Naive thymus-derived CD8-positive, alpha-beta T cell (primary cell): ENCODE measurements at regions of chr5 and their contacts with region 1.

Region 1: GRCh38 chr5:115296124-115297022 is at the start of gene CCDC112:
- DNase-seq: peak; percentile 43 to 86 (median 69)
- ATAC-seq: peak; percentile 84 to 87
- H3K4me3 Mint-ChIP-seq: peak within 1 kb of the TSS; percentile 70 to 95 (median 89)
- H3K27ac Mint-ChIP-seq: peak within 1 kb of the TSS; percentile 38 to 93 (median 54)
- H3K4me1 Mint-ChIP-seq: peaks cover 3 to 27% (median 12%) of the 10 kb centered on the region in 4 donors
- H3K27me3 Mint-ChIP-seq: peaks cover 0 to 8% (median 0%) of the 10 kb centered on the region in 5 donors
- polyA plus RNA-seq, gene CCDC112: 2.8 to 4.5 (median 4.3) TPM

Region 2: GRCh38 chr5:115262321-115263077 is 33.9 kb before region 1 on chr5 and contains the start of gene PGGT1B:
- POLR2A ChIA-PET with region 1: interaction called, 12 read pairs
- DNase-seq: peak; percentile 48 to 82 (median 65)
- ATAC-seq: peak; percentile 97
- H3K4me3 Mint-ChIP-seq: peak within 1 kb of the TSS; percentile 90 to 99 (median 96)
- H3K27ac Mint-ChIP-seq: peak within 1 kb of the TSS; percentile 95 to 98 (median 96)
- H3K4me1 Mint-ChIP-seq: peaks cover 19 to 56% (median 53%) of the 10 kb centered on the region in 4 donors
- H3K27me3 Mint-ChIP-seq: no peaks in the 10 kb centered on the region
- polyA plus RNA-seq, gene PGGT1B: 7.1 to 17.4 (median 10.8) TPM